Activated CD8-positive, alpha-beta memory T cell treated with anti-CD3 and anti-CD28 coated beads, Interleukin-2, amount 10 ng/mL, durations not matched to agents 7 days and 5 days (primary cell): ENCODE measurements at regions of chr11 and their contacts with region 1.

Region 1: DNA sequence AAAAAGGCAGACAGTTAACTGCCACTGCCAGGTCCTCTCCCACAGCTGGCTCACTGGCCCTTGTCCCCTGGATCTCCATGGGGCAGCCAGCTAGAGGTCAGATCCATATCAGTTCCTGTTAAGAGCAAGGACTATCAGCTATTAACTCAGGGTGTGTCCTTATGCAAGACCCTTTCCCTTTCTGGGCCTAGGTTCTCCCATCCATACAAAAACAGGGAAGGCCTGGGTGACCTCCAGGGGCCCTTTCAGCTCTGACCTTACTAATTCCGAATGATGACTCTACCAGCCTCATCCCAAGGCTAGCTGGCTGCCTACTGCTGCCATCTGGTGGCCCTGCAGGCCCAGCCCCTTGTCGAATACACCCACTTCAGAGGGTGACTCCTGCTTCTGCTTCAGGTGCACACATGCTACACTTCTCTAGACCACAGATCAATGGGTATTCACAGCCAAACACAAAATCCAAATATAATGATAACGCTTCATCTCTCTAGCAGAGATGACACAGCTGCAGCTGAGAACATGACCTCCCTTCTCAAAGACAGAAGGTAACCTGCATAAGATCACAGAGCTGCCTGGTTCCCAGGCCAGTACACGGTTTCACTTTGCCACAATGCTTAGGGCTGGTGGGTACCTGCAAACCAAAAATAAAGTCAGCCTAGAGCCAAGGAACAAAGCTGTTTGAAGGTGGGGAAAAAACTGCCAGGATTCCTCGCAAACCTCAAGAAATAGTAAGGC is 34.1 kb downstream of the SERGEF start:
- DNase-seq: peak; percentile 45
- ATAC-seq: no peak
- H3K4me3 Mint-ChIP-seq: no peak overlapping the region
- H3K27ac Mint-ChIP-seq: no peak overlapping the region
- H3K4me1 Mint-ChIP-seq: no peaks in the 10 kb centered on the region
- H3K27me3 Mint-ChIP-seq: no peaks in the 10 kb centered on the region

Region 2: DNA sequence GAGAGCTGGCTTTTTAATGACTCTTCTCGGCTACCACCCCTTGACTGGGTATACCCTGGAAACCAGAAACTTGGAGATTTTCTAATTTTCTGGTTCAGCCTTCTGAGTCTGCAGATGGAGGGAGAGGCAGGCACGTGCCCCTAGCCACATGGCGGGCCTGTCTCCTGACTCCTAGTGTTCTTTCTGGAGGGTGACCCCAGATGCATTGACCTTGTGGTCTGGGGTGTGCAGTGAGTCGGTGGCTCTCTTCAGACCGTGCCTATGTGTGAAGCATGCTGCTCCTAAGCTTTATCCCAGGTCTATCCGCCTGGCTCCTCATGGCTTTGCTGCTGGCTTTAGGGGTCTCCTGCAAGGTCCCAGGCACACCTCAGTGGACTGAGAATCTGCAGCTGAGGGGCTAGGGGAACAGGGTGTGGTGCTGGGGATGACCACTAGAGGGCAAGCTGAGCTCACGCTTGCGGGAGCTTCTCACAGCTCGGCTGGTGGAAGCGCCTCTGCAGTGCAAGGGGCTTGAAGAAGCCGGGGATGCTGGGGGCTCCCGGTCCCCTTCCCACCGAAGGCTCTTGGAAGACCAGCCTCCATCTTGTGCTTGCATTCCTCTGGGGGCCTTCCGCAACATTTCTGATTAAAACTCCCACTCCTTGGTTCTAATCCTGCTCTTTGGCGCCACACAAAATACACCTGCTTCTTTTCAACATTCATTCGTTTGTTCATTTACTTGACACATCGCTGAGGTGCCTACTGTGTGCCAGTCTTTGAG is 379.8 kb before region 1 on chr11:
- CTCF ChIA-PET with region 1: interaction called, 15 read pairs
- DNase-seq: peak; percentile 79
- ATAC-seq: peak; percentile 86
- H3K4me3 Mint-ChIP-seq: no peak overlapping the region
- H3K27ac Mint-ChIP-seq: no peak overlapping the region
- H3K4me1 Mint-ChIP-seq: peaks cover 3% of the 10 kb centered on the region
- H3K27me3 Mint-ChIP-seq: peaks cover 4% of the 10 kb centered on the region

Region 3: GRCh38 chr11:17730608-17731462 is 247.9 kb before region 1 on chr11:
- CTCF ChIA-PET with region 1: interaction called, 111 read pairs
- DNase-seq: peak; percentile 76
- ATAC-seq: peak; percentile 81
- H3K4me3 Mint-ChIP-seq: no peak overlapping the region
- H3K27ac Mint-ChIP-seq: no peak overlapping the region
- H3K4me1 Mint-ChIP-seq: peaks cover 4% of the 10 kb centered on the region
- H3K27me3 Mint-ChIP-seq: peaks cover 55% of the 10 kb centered on the region

Region 4: DNA sequence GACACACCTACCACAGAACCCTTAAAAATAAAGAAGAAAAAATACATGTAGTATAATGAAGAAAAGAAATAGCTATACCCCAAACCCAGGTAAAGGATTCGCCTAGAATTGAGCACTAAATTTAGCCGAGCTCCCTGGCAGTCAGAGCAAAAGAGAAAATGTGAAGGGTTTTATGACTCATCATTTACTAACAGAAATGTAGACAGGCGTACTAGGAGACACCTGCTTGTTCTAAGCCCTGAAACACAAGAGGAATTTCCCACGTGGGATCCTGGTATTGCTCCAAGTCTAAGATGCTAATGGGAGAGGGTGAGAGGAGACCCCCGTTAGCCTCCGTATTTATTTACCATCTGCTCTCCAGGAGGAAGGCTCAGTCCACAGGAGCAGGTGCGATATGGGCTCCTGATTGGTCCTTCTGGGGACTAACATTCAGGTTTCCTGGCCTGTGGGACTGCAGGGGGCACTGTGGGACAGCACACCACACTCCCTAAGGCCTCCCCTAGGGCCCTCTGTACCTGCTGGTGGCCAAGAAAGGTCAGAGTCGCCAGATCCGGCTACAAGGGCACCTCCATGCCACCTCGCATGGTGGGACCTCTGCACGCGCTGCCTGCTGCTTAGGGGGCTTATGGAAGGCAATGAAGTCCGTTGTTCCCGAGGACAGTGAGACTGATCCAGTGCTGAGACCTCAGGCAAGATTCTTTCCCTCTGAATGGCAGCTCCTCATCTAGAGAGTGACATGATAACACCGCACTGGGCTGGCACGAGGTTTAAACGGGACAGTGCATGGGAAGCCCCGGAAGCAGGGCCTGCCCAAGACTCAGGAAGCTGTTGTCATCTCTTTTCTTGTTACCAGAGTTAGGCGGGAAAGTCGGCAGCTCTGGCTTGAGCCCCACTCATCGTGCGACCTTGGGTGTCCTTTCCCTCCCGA is 218.4 kb before region 1 on chr11:
- CTCF ChIA-PET with region 1: interaction called, 19 read pairs
- DNase-seq: peak; percentile 59
- ATAC-seq: peak; percentile 76
- H3K4me3 Mint-ChIP-seq: no peak overlapping the region
- H3K27ac Mint-ChIP-seq: no peak overlapping the region
- H3K4me1 Mint-ChIP-seq: no peaks in the 10 kb centered on the region
- H3K27me3 Mint-ChIP-seq: peaks cover 2% of the 10 kb centered on the region

Region 5: GRCh38 chr11:17939542-17939941 is 39.2 kb before region 1 on chr11:
- CTCF ChIA-PET with region 1: no interaction called
- DNase-seq: no peak
- ATAC-seq: no peak
- H3K4me3 Mint-ChIP-seq: no peak overlapping the region
- H3K27ac Mint-ChIP-seq: no peak overlapping the region
- H3K4me1 Mint-ChIP-seq: no peaks in the 10 kb centered on the region
- H3K27me3 Mint-ChIP-seq: no peaks in the 10 kb centered on the region

Region 6: DNA sequence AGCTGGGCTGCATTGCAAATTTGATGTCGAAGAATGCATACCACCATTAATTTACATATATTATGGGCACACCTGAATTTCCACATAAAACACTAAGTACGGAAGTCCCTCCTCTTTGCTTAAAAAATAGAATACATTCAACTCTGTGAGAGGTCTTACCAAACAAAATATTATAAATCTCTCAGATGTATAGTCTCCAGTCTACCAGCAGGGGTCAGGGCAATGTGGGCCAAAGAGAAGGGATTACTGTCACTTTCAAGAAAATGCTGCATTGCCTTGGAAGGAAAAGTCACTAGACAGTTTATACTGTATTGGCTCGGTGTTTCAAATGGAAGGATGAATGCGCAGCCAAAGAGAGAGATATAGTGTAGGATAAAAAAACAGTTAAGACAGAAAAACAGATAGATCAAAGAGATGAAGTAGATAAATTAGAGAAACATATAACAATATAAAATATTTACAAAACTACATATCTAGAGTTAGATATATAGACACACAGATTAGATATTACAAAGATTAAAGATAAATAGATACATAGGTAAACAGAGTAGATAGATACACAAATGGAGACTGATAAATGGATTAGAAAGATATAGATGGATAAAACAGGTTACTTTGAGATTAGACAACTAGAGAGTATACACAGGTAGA is 13.2 kb after region 1 on chr11:
- CTCF ChIA-PET with region 1: interaction called, 34 read pairs
- DNase-seq: peak; percentile 59
- ATAC-seq: peak; percentile 80
- H3K4me3 Mint-ChIP-seq: no peak overlapping the region
- H3K27ac Mint-ChIP-seq: no peak overlapping the region
- H3K4me1 Mint-ChIP-seq: peaks cover 2% of the 10 kb centered on the region
- H3K27me3 Mint-ChIP-seq: no peaks in the 10 kb centered on the region